ENCODE measurements at regions of chr6 and their contacts with region 1.

Region 1: GRCh38 chr6:73520688-73521350 is at the start of gene EEF1A1:
- DNase-seq: peak; percentile 100
- H3K4me3 Mint-ChIP-seq: peak within 1 kb of the TSS; percentile 98
- H3K27ac Mint-ChIP-seq: peak within 1 kb of the TSS; percentile 100
- H3K4me1 Mint-ChIP-seq: peaks cover 39% of the 10 kb centered on the region
- H3K27me3 Mint-ChIP-seq: peaks cover 17% of the 10 kb centered on the region
- total RNA-seq, gene EEF1A1: 16,691 to 17,144 TPM

Region 2: GRCh38 chr6:73451223-73452107 is 69.4 kb before region 1 on chr6:
- CTCF ChIA-PET with region 1: interaction called, 3 read pairs
- POLR2A ChIA-PET with region 1: interaction called, 82 read pairs
- intact Hi-C with region 1: loop called (anchors 1 kb)
- DNase-seq: peak; percentile 61
- H3K4me3 Mint-ChIP-seq: peak overlapping the region; percentile 86
- H3K27ac Mint-ChIP-seq: peak overlapping the region; percentile 93
- H3K4me1 Mint-ChIP-seq: peaks cover 18% of the 10 kb centered on the region
- H3K27me3 Mint-ChIP-seq: no peaks in the 10 kb centered on the region

Region 3: DNA sequence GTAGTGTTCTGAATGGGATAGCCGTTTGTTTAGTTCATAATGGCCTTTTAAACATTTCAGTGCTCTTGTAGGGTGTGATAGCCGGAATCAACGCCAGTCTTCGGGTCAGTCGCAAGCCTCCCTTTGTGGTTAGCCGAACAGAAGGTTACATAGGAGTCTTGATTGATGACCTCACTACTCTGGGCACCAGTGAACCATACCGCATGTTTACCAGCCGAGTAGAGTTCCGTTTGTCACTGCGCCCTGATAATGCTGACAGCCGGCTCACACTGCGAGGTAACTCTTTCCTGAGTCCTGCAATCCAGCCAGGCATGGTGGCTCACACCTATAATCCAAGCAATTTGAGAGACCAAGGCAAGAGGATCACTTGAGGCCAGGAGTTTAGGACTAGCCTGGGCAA is 38.9 kb before region 1 on chr6:
- CTCF ChIA-PET with region 1: no interaction called
- POLR2A ChIA-PET with region 1: no interaction called
- intact Hi-C with region 1: no loop called
- DNase-seq: no peak
- H3K4me3 Mint-ChIP-seq: no peak overlapping the region
- H3K27ac Mint-ChIP-seq: no peak overlapping the region
- H3K4me1 Mint-ChIP-seq: no peaks in the 10 kb centered on the region
- H3K27me3 Mint-ChIP-seq: no peaks in the 10 kb centered on the region

Region 4: DNA sequence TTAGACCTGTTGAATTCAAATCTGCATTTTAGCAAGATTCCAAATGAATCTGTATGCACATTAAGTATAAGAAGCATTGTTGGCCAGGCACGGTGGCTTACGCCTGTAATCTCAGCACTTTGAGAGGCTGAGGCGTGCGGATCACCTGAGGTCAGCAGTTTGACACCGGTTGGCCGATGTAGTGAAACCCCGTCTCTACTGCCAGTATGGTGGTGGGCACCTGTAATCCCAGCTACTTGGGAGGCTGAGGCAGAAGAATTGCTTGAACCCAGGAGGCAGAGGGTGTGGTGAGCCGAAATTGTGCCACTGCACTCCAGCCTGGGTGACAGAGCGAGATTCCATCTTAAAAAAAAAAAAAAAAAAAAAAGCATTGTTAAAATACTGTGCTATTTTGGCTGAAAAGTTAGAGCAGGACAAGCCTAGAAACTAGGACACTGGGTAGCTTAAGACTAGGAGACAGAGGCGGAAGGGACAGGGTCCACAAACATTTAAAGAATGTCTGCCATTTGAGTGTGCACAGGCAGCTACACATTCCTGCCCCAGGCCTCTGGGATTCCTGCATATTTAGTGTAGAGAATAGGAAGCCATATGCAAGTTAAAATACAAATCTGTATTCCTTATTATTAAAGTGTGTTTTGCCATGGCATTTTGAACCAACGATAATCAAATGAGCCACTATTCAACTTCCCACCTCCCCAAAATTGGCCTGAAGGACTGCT is 45.1 kb after region 1 on chr6:
- CTCF ChIA-PET with region 1: no interaction called
- POLR2A ChIA-PET with region 1: no interaction called
- intact Hi-C with region 1: no loop called
- DNase-seq: no peak
- H3K4me3 Mint-ChIP-seq: no peak overlapping the region
- H3K27ac Mint-ChIP-seq: no peak overlapping the region
- H3K4me1 Mint-ChIP-seq: peaks cover 2% of the 10 kb centered on the region
- H3K27me3 Mint-ChIP-seq: no peaks in the 10 kb centered on the region

Region 5: GRCh38 chr6:73585566-73586415 is 65.0 kb after region 1 on chr6:
- CTCF ChIA-PET with region 1: interaction called, 11 read pairs
- POLR2A ChIA-PET with region 1: interaction called, 67 read pairs
- intact Hi-C with region 1: loop called (anchors 1 kb)
- DNase-seq: peak; percentile 45
- H3K4me3 Mint-ChIP-seq: peak overlapping the region; percentile 75
- H3K27ac Mint-ChIP-seq: peak overlapping the region; percentile 95
- H3K4me1 Mint-ChIP-seq: peaks cover 24% of the 10 kb centered on the region
- H3K27me3 Mint-ChIP-seq: peaks cover 2% of the 10 kb centered on the region

Region 6: DNA sequence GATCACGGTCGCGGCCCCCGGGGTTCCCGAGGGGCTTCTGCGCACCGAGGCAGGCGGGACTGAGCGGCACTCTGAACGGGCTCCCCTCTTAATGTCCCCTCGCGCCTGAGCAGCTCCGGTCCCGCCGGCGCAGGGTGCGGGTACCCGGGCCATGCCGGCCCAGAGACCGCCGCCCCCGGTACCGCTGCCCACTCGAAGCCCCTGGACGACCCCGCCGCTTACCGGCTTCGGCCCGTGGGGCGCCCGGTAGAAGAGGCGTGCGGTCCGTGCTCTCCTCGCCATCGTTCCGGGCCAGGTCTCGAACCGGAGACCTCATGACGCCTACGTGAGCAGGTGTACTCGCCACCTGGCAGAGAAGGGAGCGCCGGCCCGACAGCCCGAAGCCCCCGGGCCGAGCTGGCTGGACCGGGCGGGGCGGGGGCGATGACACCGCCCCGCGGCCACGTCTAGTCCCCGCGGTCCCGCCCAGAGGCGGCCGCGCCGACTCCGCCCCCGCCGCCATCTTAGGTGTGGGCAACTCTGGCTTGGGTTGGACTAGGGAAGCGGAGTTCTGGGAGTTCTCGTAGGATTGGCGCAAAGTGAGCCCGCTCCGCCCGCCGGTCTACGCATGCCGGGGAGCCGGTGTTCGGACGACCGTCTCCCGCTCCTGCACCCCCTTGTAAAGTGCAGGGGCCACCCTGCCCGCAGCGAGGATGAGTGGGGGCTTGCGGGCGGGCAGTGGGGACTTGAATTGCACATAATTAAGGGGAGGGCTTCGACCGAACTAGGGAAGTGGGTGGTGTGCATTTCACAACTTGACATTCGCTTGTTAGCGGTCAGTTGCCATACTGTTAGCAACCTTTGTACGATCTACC is 133.0 kb after region 1 on chr6 and contains the start of gene SLC17A5:
- CTCF ChIA-PET with region 1: interaction called, 15 read pairs
- POLR2A ChIA-PET with region 1: interaction called, 51 read pairs
- intact Hi-C with region 1: loop called (anchors 1 kb)
- DNase-seq: peak; percentile 94
- H3K4me3 Mint-ChIP-seq: peak within 1 kb of the TSS; percentile 97
- H3K27ac Mint-ChIP-seq: peak within 1 kb of the TSS; percentile 95
- H3K4me1 Mint-ChIP-seq: peaks cover 23% of the 10 kb centered on the region
- H3K27me3 Mint-ChIP-seq: no peaks in the 10 kb centered on the region
- total RNA-seq, gene SLC17A5: 5.1 to 5.4 TPM

Region 7: GRCh38 chr6:75243333-75244062 is 1722.7 kb after region 1 on chr6 and contains the start of gene COX7A2:
- CTCF ChIA-PET with region 1: no interaction called
- POLR2A ChIA-PET with region 1: no interaction called
- intact Hi-C with region 1: loop called (anchors 1 kb)
- DNase-seq: peak; percentile 92
- H3K4me3 Mint-ChIP-seq: peak within 1 kb of the TSS; percentile 100
- H3K27ac Mint-ChIP-seq: peak within 1 kb of the TSS; percentile 100
- H3K4me1 Mint-ChIP-seq: peaks cover 26% of the 10 kb centered on the region
- H3K27me3 Mint-ChIP-seq: peaks cover 9% of the 10 kb centered on the region
- total RNA-seq, gene COX7A2: 564 to 566 TPM

Measured in activated CD4-positive, alpha-beta memory T cell treated with anti-CD3 and anti-CD28 coated beads for 36 hours (primary cell).